ENCODE measurements at regions of chrX and their contacts with region 1.

Region 1: GRCh38 chrX:39504850-39505259 is 592.9 kb downstream of the BCOR start:
- DNase-seq: no peak
- H3K4me3 Mint-ChIP-seq: no peak overlapping the region
- H3K27ac Mint-ChIP-seq: no peak overlapping the region
- H3K4me1 Mint-ChIP-seq: peaks cover 15% of the 10 kb centered on the region
- H3K27me3 Mint-ChIP-seq: no peaks in the 10 kb centered on the region

Region 2: GRCh38 chrX:39470588-39471407 is 34.1 kb before region 1 on chrX:
- intact Hi-C with region 1: no loop called
- DNase-seq: no peak
- H3K4me3 Mint-ChIP-seq: no peak overlapping the region
- H3K27ac Mint-ChIP-seq: no peak overlapping the region
- H3K4me1 Mint-ChIP-seq: no peaks in the 10 kb centered on the region
- H3K27me3 Mint-ChIP-seq: no peaks in the 10 kb centered on the region

Region 3: GRCh38 chrX:39491548-39492297 is 13.1 kb before region 1 on chrX:
- intact Hi-C with region 1: loop called (anchors 2 kb)
- DNase-seq: peak; percentile 82
- H3K4me3 Mint-ChIP-seq: peak overlapping the region; percentile 21
- H3K27ac Mint-ChIP-seq: peak overlapping the region; percentile 54
- H3K4me1 Mint-ChIP-seq: peaks cover 37% of the 10 kb centered on the region
- H3K27me3 Mint-ChIP-seq: no peaks in the 10 kb centered on the region